Motor neuron (in vitro differentiated cells): ENCODE measurements at regions of chr12 and their contacts with region 1.

Region 1: GRCh38 chr12:12916135-12916944 is 25.0 kb downstream of the GPRC5A start:
- ATAC-seq: peak; percentile 56 to 99 (median 98)
- H3K4me3 ChIP-seq: no peak overlapping the region
- H3K27ac ChIP-seq: no peak overlapping the region
- H3K4me1 ChIP-seq: peaks cover 7 to 12% of the 10 kb centered on the region in 2 donors

Region 2: GRCh38 chr12:12983420-12984035 is 67.2 kb after region 1 on chr12:
- in situ Hi-C with region 1: loop called in 1 of 9 experiments (anchors 10 kb)
- ATAC-seq: peak in 7 of 8 experiments; percentile 6 to 65 (median 35)
- H3K4me3 ChIP-seq: no peak overlapping the region
- H3K27ac ChIP-seq: no peak overlapping the region
- H3K4me1 ChIP-seq: peaks cover 10 to 20% of the 10 kb centered on the region in 2 donors